ENCODE measurements at regions of chr2 and their contacts with region 1.

Region 1: GRCh38 chr2:151498178-151498577 is 88.5 kb downstream of the RIF1 start:
- DNase-seq: no peak
- H3K4me3 ChIP-seq: no peak overlapping the region
- H3K27ac ChIP-seq: no peak overlapping the region
- H3K4me1 ChIP-seq: no peaks in the 10 kb centered on the region
- H3K27me3 ChIP-seq: no peaks in the 10 kb centered on the region
- CTCF ChIP-seq: no peak

Region 2: DNA sequence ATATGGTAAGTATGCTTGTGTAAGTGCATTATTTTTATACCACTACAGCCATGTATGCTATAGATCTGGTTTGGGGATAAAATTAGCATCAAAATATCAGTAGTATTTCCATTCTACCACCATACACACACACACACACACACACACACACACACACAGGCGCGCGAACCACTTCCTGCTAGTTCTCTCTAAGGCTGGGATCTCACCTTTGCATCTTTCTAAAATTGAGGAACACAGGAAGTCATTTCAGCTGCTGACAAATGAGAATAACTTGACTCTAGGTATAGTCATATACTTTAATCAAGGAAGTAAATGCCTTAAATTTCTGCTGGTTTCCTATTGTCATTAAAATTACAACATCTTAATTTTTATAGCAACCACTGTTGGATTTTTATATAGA is 309.1 kb before region 1 on chr2:
- CTCF ChIA-PET with region 1: no interaction called
- POLR2A ChIA-PET with region 1: no interaction called
- intact Hi-C with region 1: no loop called
- DNase-seq: no peak
- H3K4me3 ChIP-seq: no peak overlapping the region
- H3K27ac ChIP-seq: no peak overlapping the region
- H3K4me1 ChIP-seq: no peaks in the 10 kb centered on the region
- H3K27me3 ChIP-seq: no peaks in the 10 kb centered on the region
- CTCF ChIP-seq: no peak

Region 3: GRCh38 chr2:151886241-151886640 is 388.1 kb after region 1 on chr2:
- CTCF ChIA-PET with region 1: no interaction called
- POLR2A ChIA-PET with region 1: interaction called, 11 read pairs
- intact Hi-C with region 1: no loop called
- DNase-seq: peak; percentile 11
- H3K4me3 ChIP-seq: no peak overlapping the region
- H3K27ac ChIP-seq: no peak overlapping the region
- H3K4me1 ChIP-seq: no peaks in the 10 kb centered on the region
- H3K27me3 ChIP-seq: peaks cover 47% of the 10 kb centered on the region
- CTCF ChIP-seq: no peak